Naive thymus-derived CD4-positive, alpha-beta T cell (primary cell): ENCODE measurements at regions of chr2 and their contacts with region 1.

Region 1: DNA sequence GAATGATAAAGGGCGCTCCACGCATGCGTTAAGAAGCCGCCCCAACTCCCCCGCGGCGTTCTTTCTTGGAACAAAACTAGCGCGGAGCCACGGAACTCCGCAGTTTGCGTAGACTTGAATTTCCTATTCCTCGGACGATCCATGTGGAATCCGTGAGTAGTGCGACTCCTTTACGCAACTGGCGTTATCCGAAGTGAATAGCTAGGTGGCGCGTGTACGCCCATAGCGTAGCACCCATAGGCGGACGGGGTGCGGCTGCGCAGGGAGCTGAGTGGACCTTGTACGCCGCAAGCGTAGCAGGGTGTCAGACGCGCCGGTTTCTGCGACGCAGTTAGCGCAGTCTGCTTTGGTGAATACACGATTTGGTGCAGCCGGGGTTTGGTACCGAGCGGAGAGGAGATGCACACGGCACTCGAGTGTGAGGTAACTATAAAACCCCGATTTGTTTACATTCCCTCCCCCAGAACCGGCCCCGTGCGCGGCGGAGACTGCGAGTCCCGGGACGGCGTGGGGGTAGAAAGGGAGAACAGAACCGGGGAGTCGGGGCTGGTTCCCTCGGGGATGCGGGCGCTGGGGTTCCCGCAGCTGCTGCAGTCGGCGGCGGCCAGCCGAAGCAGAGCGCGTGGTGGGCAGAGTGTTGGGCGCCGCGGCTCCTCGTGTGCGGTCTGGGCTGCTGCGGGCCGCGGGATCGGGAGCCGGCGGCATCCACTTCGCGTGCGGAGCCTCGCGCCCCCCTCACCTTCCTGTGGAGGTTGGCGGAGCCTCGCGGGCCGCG is at the start of gene SLC39A10:
- DNase-seq: peak; percentile 95 to 100 (median 98)
- ATAC-seq: peak; percentile 86
- H3K4me3 ChIP-seq: peak within 1 kb of the TSS; percentile 81
- H3K4me3 Mint-ChIP-seq: peak within 1 kb of the TSS; percentile 95 to 100 (median 99)
- H3K27ac ChIP-seq: peak within 1 kb of the TSS; percentile 99
- H3K27ac Mint-ChIP-seq: peak within 1 kb of the TSS; percentile 100
- H3K4me1 ChIP-seq: peaks cover 3 to 24% of the 10 kb centered on the region in 2 donors
- H3K4me1 Mint-ChIP-seq: peaks cover 7 to 36% (median 30%) of the 10 kb centered on the region in 7 donors
- H3K27me3 ChIP-seq: no peaks in the 10 kb centered on the region
- H3K27me3 Mint-ChIP-seq: peaks cover 0 to 9% (median 0%) of the 10 kb centered on the region in 5 donors
- total RNA-seq, gene SLC39A10: 48.3 to 92.9 (median 60.7) TPM

Region 2: GRCh38 chr2:195094330-195094729 is 562.7 kb before region 1 on chr2:
- CTCF ChIA-PET with region 1: no interaction called
- POLR2A ChIA-PET with region 1: no interaction called
- intact Hi-C with region 1: loop called in 1 of 2 experiments (anchors 10 kb)
- DNase-seq: no peak
- ATAC-seq: no peak
- H3K4me3 ChIP-seq: no peak overlapping the region
- H3K4me3 Mint-ChIP-seq: no peak overlapping the region
- H3K27ac ChIP-seq: no peak overlapping the region
- H3K27ac Mint-ChIP-seq: no peak overlapping the region
- H3K4me1 ChIP-seq: no peaks in the 10 kb centered on the region
- H3K4me1 Mint-ChIP-seq: no peaks in the 10 kb centered on the region
- H3K27me3 ChIP-seq: no peaks in the 10 kb centered on the region
- H3K27me3 Mint-ChIP-seq: peaks cover 0 to 8% (median 4%) of the 10 kb centered on the region in 5 donors

Region 3: GRCh38 chr2:195451160-195451559 is 205.9 kb before region 1 on chr2:
- CTCF ChIA-PET with region 1: no interaction called
- POLR2A ChIA-PET with region 1: no interaction called
- intact Hi-C with region 1: no loop called
- DNase-seq: no peak
- ATAC-seq: no peak
- H3K4me3 ChIP-seq: no peak overlapping the region
- H3K4me3 Mint-ChIP-seq: no peak overlapping the region
- H3K27ac ChIP-seq: no peak overlapping the region
- H3K27ac Mint-ChIP-seq: no peak overlapping the region
- H3K4me1 ChIP-seq: no peaks in the 10 kb centered on the region
- H3K4me1 Mint-ChIP-seq: peaks cover 0 to 18% (median 11%) of the 10 kb centered on the region in 7 donors
- H3K27me3 ChIP-seq: no peaks in the 10 kb centered on the region
- H3K27me3 Mint-ChIP-seq: no peaks in the 10 kb centered on the region

Region 4: GRCh38 chr2:195486987-195487644 is 169.9 kb before region 1 on chr2:
- CTCF ChIA-PET with region 1: no interaction called
- POLR2A ChIA-PET with region 1: interaction called, 6 read pairs
- intact Hi-C with region 1: loop called in 1 of 2 experiments (anchors 1 kb)
- DNase-seq: no peak
- ATAC-seq: peak; percentile 41
- H3K4me3 ChIP-seq: no peak overlapping the region
- H3K4me3 Mint-ChIP-seq: peak overlapping the region in 5 of 10 donors; percentile 3 to 74 (median 28)
- H3K27ac ChIP-seq: no peak overlapping the region
- H3K27ac Mint-ChIP-seq: peak overlapping the region in 2 of 9 donors; percentile 21 to 79
- H3K4me1 ChIP-seq: peaks cover 0 to 6% of the 10 kb centered on the region in 2 donors
- H3K4me1 Mint-ChIP-seq: peaks cover 0 to 43% (median 21%) of the 10 kb centered on the region in 7 donors
- H3K27me3 ChIP-seq: no peaks in the 10 kb centered on the region
- H3K27me3 Mint-ChIP-seq: no peaks in the 10 kb centered on the region

Region 5: DNA sequence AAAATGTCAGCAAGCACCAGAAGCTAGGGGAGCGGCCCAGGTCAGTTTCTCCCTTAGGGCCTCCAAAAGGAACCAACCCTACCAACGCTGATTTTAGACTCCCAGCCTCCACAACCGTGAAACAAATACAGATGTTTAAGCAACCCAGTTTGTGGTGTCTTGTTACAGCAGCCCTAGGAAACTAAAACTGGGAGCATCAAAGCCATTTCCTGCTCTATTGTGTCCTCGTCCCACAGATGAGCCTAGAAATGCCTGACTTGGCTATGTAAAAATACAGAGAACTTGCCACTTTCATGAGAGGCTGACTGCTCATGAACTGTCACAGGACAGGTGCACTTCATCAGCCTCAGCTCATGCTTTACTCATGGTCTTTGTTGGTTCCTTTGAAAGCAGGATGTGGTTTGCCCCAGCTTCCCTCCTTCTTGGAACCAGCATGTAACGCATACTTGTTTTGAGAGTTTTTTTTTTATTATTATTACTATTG is 97.6 kb before region 1 on chr2:
- CTCF ChIA-PET with region 1: interaction called, 7 read pairs
- POLR2A ChIA-PET with region 1: interaction called, 103 read pairs
- intact Hi-C with region 1: loop called (anchors 1 kb)
- DNase-seq: peak; percentile 14 to 93 (median 90)
- ATAC-seq: peak; percentile 94
- H3K4me3 ChIP-seq: peak overlapping the region; percentile 33
- H3K4me3 Mint-ChIP-seq: peak overlapping the region; percentile 61 to 89 (median 76)
- H3K27ac ChIP-seq: peak overlapping the region; percentile 71
- H3K27ac Mint-ChIP-seq: peak overlapping the region; percentile 84 to 99 (median 94)
- H3K4me1 ChIP-seq: peaks cover 58 to 74% of the 10 kb centered on the region in 2 donors
- H3K4me1 Mint-ChIP-seq: peaks cover 43 to 78% (median 69%) of the 10 kb centered on the region in 7 donors
- H3K27me3 ChIP-seq: no peaks in the 10 kb centered on the region
- H3K27me3 Mint-ChIP-seq: no peaks in the 10 kb centered on the region

Region 6: GRCh38 chr2:195695002-195695631 is 38.1 kb after region 1 on chr2:
- CTCF ChIA-PET with region 1: no interaction called
- POLR2A ChIA-PET with region 1: no interaction called
- intact Hi-C with region 1: no loop called
- DNase-seq: no peak
- ATAC-seq: no peak
- H3K4me3 ChIP-seq: no peak overlapping the region
- H3K4me3 Mint-ChIP-seq: no peak overlapping the region
- H3K27ac ChIP-seq: no peak overlapping the region
- H3K27ac Mint-ChIP-seq: no peak overlapping the region
- H3K4me1 ChIP-seq: peaks cover 0 to 5% of the 10 kb centered on the region in 2 donors
- H3K4me1 Mint-ChIP-seq: peaks cover 29 to 80% (median 71%) of the 10 kb centered on the region in 7 donors
- H3K27me3 ChIP-seq: no peaks in the 10 kb centered on the region
- H3K27me3 Mint-ChIP-seq: no peaks in the 10 kb centered on the region

Region 7: GRCh38 chr2:196068271-196069209 is 411.5 kb after region 1 on chr2 and contains the start of gene DNAH7:
- CTCF ChIA-PET with region 1: interaction called, 7 read pairs
- POLR2A ChIA-PET with region 1: interaction called, 3 read pairs
- intact Hi-C with region 1: loop called (anchors 1 kb)
- DNase-seq: peak; percentile 84 to 94 (median 92)
- ATAC-seq: peak; percentile 96
- H3K4me3 ChIP-seq: peak within 1 kb of the TSS; percentile 69
- H3K4me3 Mint-ChIP-seq: peak within 1 kb of the TSS; percentile 77 to 92 (median 88)
- H3K27ac ChIP-seq: peak within 1 kb of the TSS; percentile 45
- H3K27ac Mint-ChIP-seq: peak within 1 kb of the TSS; percentile 75 to 94 (median 86)
- H3K4me1 ChIP-seq: peaks cover 6% of the 10 kb centered on the region in 2 donors
- H3K4me1 Mint-ChIP-seq: peaks cover 6 to 16% (median 12%) of the 10 kb centered on the region in 7 donors
- H3K27me3 ChIP-seq: peaks cover 0 to 3% of the 10 kb centered on the region in 2 donors
- H3K27me3 Mint-ChIP-seq: peaks cover 0 to 33% (median 3%) of the 10 kb centered on the region in 5 donors
- total RNA-seq, gene DNAH7: not detected

Region 8: GRCh38 chr2:196277002-196277401 is 620.0 kb after region 1 on chr2:
- CTCF ChIA-PET with region 1: no interaction called
- POLR2A ChIA-PET with region 1: no interaction called
- intact Hi-C with region 1: loop called in 1 of 2 experiments (anchors 5 kb)
- DNase-seq: peak in 7 of 9 donors; percentile 45 to 74 (median 63)
- ATAC-seq: peak; percentile 79
- H3K4me3 ChIP-seq: no peak overlapping the region
- H3K4me3 Mint-ChIP-seq: peak overlapping the region in 6 of 10 donors; percentile 30 to 83 (median 65)
- H3K27ac ChIP-seq: peak overlapping the region; percentile 63
- H3K27ac Mint-ChIP-seq: peak overlapping the region; percentile 50 to 99 (median 89)
- H3K4me1 ChIP-seq: peaks cover 21 to 42% of the 10 kb centered on the region in 2 donors
- H3K4me1 Mint-ChIP-seq: peaks cover 29 to 60% (median 47%) of the 10 kb centered on the region in 7 donors
- H3K27me3 ChIP-seq: no peaks in the 10 kb centered on the region
- H3K27me3 Mint-ChIP-seq: no peaks in the 10 kb centered on the region

Region 9: DNA sequence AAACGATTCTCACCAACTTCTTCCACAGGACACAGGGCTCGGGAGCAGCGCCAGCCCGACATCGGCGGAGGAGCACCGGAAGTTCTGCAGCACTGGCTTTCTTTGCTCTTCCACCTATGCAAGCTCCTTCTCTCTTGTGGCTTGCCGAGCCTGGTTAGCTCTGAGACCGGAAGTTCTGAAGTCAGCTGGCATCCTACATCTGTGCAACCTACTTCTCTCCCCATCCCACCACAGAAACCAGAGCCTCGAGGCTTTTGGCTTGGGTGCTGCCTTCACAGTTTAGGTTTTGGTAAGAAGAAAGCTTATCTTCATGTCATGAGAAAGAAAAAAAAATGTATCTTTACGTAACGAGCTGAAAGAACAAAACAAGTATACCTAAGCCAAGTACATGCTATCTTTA is 1541.8 kb after region 1 on chr2:
- CTCF ChIA-PET with region 1: no interaction called
- POLR2A ChIA-PET with region 1: no interaction called
- intact Hi-C with region 1: loop called in 1 of 2 experiments (anchors 2 kb)
- DNase-seq: peak; percentile 56 to 98 (median 96)
- ATAC-seq: peak; percentile 94
- H3K4me3 ChIP-seq: peak overlapping the region; percentile 50
- H3K4me3 Mint-ChIP-seq: peak overlapping the region; percentile 83 to 100 (median 90)
- H3K27ac ChIP-seq: peak overlapping the region; percentile 81
- H3K27ac Mint-ChIP-seq: peak overlapping the region; percentile 93 to 100 (median 98)
- H3K4me1 ChIP-seq: peaks cover 75 to 83% of the 10 kb centered on the region in 2 donors
- H3K4me1 Mint-ChIP-seq: peaks cover 56 to 98% (median 86%) of the 10 kb centered on the region in 7 donors
- H3K27me3 ChIP-seq: no peaks in the 10 kb centered on the region
- H3K27me3 Mint-ChIP-seq: peaks cover 0 to 3% (median 0%) of the 10 kb centered on the region in 5 donors